Activated naive CD4-positive, alpha-beta T cell treated with anti-CD3 and anti-CD28 coated beads for 36 hours (primary cell): ENCODE measurements at regions of chr5 and their contacts with region 1.

Region 1: GRCh38 chr5:73454351-73455036 is 5.9 kb upstream of the FOXD1 start:
- DNase-seq: peak; percentile 49
- H3K4me3 Mint-ChIP-seq: no peak overlapping the region
- H3K27ac Mint-ChIP-seq: no peak overlapping the region
- H3K4me1 Mint-ChIP-seq: no peaks in the 10 kb centered on the region
- H3K27me3 Mint-ChIP-seq: peaks cover 61% of the 10 kb centered on the region

Region 2: DNA sequence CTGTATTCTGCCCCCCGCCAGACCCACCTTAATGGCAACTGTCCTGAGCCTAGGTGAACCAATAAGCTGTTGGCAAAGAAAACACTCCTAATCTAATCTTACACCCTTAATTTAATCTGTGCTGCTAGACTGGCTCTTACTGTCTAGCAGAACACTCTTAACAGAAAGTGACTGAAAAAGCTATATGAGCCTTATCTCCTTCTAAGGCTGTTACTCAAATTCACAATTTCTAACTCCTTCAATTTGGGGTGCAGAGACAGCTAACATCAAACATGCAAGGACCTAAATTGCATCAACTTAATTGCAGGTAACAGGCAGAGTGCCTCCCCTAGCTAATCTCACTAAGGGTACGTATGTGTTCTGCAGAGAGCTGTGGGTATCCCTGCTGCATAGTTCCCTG is 1396.7 kb before region 1 on chr5:
- CTCF ChIA-PET with region 1: no interaction called
- intact Hi-C with region 1: no loop called
- DNase-seq: no peak
- H3K4me3 Mint-ChIP-seq: no peak overlapping the region
- H3K27ac Mint-ChIP-seq: no peak overlapping the region
- H3K4me1 Mint-ChIP-seq: no peaks in the 10 kb centered on the region
- H3K27me3 Mint-ChIP-seq: peaks cover 5% of the 10 kb centered on the region

Region 3: GRCh38 chr5:73233347-73234200 is 220.9 kb before region 1 on chr5:
- CTCF ChIA-PET with region 1: no interaction called
- intact Hi-C with region 1: loop called (anchors 5 kb)
- DNase-seq: peak; percentile 34
- H3K4me3 Mint-ChIP-seq: peak overlapping the region; percentile 29
- H3K27ac Mint-ChIP-seq: no peak overlapping the region
- H3K4me1 Mint-ChIP-seq: peaks cover 24% of the 10 kb centered on the region
- H3K27me3 Mint-ChIP-seq: peaks cover 70% of the 10 kb centered on the region

Region 4: GRCh38 chr5:73338256-73339050 is 116.0 kb before region 1 on chr5:
- CTCF ChIA-PET with region 1: no interaction called
- intact Hi-C with region 1: no loop called
- DNase-seq: no peak
- H3K4me3 Mint-ChIP-seq: no peak overlapping the region
- H3K27ac Mint-ChIP-seq: no peak overlapping the region
- H3K4me1 Mint-ChIP-seq: no peaks in the 10 kb centered on the region
- H3K27me3 Mint-ChIP-seq: peaks cover 57% of the 10 kb centered on the region

Region 5: DNA sequence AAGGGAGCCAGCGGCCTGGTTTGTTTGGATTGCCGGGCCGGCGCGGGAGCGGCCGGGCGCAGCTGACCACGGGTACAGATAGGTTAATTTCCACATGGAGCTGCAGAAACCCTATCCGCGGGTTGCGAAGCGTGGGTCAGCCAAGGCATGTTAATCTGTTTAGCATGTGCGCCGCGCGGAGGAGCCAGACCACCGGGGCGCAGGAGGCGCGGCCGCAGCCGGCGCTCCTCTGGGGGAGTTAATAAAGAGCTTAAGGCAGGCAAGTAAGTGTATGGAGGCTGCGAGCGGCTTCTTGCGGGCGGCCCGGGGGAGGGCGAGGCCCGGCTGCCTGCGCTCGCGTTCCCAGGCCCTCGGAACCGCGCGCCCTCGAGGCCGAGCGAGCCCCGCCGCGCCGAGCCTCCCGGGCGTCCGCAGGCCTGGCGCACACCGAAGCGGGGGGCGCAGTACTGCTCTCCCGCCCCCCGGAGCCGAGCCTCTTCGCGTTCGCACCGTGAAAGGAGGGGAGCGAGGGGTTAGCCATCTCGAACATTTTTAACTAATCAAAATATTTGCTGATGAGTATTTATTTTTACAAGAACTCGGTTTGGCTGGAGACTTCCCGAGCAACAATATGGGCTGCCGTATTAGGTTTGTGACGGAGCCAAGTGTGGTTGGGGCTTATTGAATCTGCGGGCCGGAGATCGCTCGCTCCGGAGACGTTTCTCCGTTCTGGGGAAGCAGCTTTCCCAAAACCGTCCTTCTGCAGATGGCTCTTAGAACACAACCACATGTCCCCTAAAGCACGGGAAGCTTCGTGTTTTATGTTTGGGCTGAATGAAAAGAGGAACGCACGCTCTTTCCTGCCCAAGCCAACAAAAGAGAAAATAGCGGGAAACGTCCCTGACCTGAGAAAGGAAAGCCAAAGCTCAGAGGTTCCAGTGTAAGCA is 34.8 kb before region 1 on chr5:
- CTCF ChIA-PET with region 1: interaction called, 5 read pairs
- intact Hi-C with region 1: loop called (anchors 5 kb)
- DNase-seq: no peak
- H3K4me3 Mint-ChIP-seq: peak overlapping the region; percentile 43
- H3K27ac Mint-ChIP-seq: no peak overlapping the region
- H3K4me1 Mint-ChIP-seq: peaks cover 11% of the 10 kb centered on the region
- H3K27me3 Mint-ChIP-seq: peaks cover 75% of the 10 kb centered on the region

Region 6: GRCh38 chr5:73437101-73437776 is 17.3 kb before region 1 on chr5:
- CTCF ChIA-PET with region 1: interaction called, 6 read pairs
- intact Hi-C with region 1: loop called (anchors 1 kb)
- DNase-seq: no peak
- H3K4me3 Mint-ChIP-seq: peak overlapping the region; percentile 56
- H3K27ac Mint-ChIP-seq: no peak overlapping the region
- H3K4me1 Mint-ChIP-seq: peaks cover 15% of the 10 kb centered on the region
- H3K27me3 Mint-ChIP-seq: peaks cover 78% of the 10 kb centered on the region

Region 7: DNA sequence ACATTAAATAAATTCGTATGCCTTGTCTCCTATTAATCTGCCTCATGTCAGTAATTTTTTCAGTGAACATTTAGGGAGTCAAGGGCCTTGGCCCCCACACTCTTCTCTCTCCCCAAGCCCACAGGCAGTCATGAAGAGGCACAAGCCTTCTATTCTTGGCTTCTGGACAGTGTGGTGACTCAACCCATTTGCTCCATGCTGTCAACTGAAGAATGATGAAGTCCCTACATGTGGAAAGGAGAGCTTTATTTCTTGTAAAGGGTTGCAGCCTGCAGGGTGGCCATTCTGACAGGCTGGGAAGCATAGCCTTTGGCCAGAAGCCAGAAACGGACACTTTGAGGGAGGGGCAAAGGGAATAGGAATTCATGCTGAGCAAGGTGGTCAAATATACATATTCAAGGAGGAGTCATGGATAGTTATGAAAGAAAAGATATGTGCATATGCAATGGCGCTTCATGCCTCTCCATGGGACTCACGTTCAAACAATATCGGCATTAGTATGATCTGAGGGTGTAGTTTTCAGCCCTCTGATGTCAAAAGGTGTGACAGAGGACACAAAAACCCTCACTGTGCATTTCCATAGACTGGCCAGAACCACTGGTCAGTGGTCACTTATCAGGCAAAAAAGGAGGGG is 79.6 kb after region 1 on chr5:
- CTCF ChIA-PET with region 1: no interaction called
- intact Hi-C with region 1: loop called (anchors 5 kb)
- DNase-seq: no peak
- H3K4me3 Mint-ChIP-seq: no peak overlapping the region
- H3K27ac Mint-ChIP-seq: no peak overlapping the region
- H3K4me1 Mint-ChIP-seq: no peaks in the 10 kb centered on the region
- H3K27me3 Mint-ChIP-seq: peaks cover 17% of the 10 kb centered on the region

Region 8: DNA sequence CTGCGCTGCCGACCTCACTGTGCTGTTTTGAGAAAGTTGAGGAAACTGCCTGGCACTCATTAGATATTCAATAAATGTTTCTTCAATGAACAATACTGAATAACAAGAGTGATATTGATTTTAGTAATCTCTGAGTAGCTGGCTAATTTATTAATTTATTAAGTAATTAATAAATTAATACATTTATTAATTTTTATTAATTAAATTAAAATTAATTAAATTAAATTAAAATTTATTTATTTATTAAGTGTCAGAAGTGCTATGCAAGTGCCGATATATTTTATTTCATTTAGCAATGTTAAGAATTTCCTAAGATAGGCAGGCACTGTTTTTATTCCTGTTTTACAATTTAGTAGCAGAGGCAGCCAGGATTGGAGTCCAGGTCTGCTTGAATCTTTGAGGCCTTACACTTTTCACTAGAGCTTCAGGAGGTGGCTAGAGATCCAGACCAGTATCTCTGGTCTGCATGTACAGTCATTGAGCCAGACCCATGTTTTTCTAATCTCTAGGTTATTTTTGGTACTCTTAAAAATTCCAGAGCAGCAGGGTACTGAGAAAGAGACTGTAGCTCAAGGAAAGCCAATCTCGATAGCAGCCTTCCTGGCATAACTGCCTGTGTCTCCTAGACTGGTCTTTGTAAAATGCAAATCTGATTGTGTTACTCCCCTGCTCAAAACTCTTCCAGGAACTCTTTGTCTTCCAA is 280.7 kb after region 1 on chr5:
- CTCF ChIA-PET with region 1: no interaction called
- intact Hi-C with region 1: no loop called
- DNase-seq: no peak
- H3K4me3 Mint-ChIP-seq: no peak overlapping the region
- H3K27ac Mint-ChIP-seq: no peak overlapping the region
- H3K4me1 Mint-ChIP-seq: no peaks in the 10 kb centered on the region
- H3K27me3 Mint-ChIP-seq: peaks cover 23% of the 10 kb centered on the region